ENCODE measurements at regions of chr11 and their contacts with region 1.

Region 1: DNA sequence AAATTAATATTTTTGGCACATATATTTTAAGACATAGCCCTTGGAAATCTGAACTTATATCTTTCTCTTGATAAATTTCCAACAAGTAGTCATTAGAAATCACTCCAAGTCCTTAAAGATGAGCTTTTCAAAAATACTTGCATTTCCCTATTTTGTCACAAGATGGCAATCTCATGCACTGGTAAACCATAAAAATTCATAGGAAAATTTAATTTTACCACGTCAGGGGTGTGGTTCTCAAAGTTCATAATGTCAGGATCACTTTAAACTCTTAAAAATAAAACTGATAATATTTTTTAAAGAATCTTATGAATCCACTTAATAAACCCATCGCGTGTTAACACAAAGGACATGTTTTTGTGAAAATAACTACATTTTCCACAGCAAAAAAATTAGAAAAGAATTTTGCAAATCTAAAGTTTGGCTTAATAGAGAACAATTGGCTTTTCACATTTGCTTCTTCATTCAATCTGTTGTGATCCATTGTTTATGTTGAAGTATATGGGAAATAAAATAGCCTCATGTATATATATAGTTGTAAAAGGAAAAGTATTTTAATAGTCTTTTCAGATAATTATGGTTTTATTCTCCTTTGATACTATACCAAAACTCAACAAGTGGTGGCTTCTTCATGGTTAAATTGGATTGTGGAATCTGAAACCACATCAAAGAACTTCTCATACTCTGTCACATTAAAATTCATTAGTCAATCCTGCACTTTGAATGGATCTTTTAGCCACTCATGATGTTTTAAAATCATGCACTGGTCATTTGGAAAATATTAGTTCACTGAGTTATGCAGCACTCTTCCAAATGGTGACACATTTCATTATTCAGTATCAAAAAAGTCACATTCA is 169.1 kb downstream of the CADM1 start:
- DNase-seq: peak in 1 of 2 experiments; percentile 56
- H3K4me3 ChIP-seq: no peak overlapping the region
- H3K4me3 Mint-ChIP-seq: no peak overlapping the region
- H3K27ac Mint-ChIP-seq: no peak overlapping the region
- H3K4me1 ChIP-seq: peaks cover 21% of the 10 kb centered on the region
- H3K4me1 Mint-ChIP-seq: peaks cover 6% of the 10 kb centered on the region
- H3K27me3 ChIP-seq: no peaks in the 10 kb centered on the region
- H3K27me3 Mint-ChIP-seq: no peaks in the 10 kb centered on the region
- CTCF ChIP-seq: peak; percentile 85

Region 2: GRCh38 chr11:115409691-115410220 is 74.6 kb after region 1 on chr11:
- CTCF ChIA-PET with region 1: interaction called, 4 read pairs
- POLR2A ChIA-PET with region 1: no interaction called
- intact Hi-C with region 1: loop called (anchors 2 kb)
- DNase-seq: peak in 1 of 2 experiments; percentile 24
- H3K4me3 ChIP-seq: no peak overlapping the region
- H3K4me3 Mint-ChIP-seq: no peak overlapping the region
- H3K27ac Mint-ChIP-seq: peak overlapping the region; percentile 1
- H3K4me1 ChIP-seq: peaks cover 43% of the 10 kb centered on the region
- H3K4me1 Mint-ChIP-seq: peaks cover 42% of the 10 kb centered on the region
- H3K27me3 ChIP-seq: no peaks in the 10 kb centered on the region
- H3K27me3 Mint-ChIP-seq: no peaks in the 10 kb centered on the region
- CTCF ChIP-seq: no peak

Region 3: GRCh38 chr11:115548878-115549528 is 213.8 kb after region 1 on chr11:
- CTCF ChIA-PET with region 1: interaction called, 11 read pairs
- POLR2A ChIA-PET with region 1: no interaction called
- intact Hi-C with region 1: loop called (anchors 1 kb)
- DNase-seq: peak; percentile 91 to 96
- H3K4me3 ChIP-seq: no peak overlapping the region
- H3K4me3 Mint-ChIP-seq: peak overlapping the region; percentile 36
- H3K27ac Mint-ChIP-seq: peak overlapping the region; percentile 77
- H3K4me1 ChIP-seq: peaks cover 27% of the 10 kb centered on the region
- H3K4me1 Mint-ChIP-seq: peaks cover 30% of the 10 kb centered on the region
- H3K27me3 ChIP-seq: no peaks in the 10 kb centered on the region
- H3K27me3 Mint-ChIP-seq: no peaks in the 10 kb centered on the region
- CTCF ChIP-seq: peak; percentile 32 to 65

Region 4: DNA sequence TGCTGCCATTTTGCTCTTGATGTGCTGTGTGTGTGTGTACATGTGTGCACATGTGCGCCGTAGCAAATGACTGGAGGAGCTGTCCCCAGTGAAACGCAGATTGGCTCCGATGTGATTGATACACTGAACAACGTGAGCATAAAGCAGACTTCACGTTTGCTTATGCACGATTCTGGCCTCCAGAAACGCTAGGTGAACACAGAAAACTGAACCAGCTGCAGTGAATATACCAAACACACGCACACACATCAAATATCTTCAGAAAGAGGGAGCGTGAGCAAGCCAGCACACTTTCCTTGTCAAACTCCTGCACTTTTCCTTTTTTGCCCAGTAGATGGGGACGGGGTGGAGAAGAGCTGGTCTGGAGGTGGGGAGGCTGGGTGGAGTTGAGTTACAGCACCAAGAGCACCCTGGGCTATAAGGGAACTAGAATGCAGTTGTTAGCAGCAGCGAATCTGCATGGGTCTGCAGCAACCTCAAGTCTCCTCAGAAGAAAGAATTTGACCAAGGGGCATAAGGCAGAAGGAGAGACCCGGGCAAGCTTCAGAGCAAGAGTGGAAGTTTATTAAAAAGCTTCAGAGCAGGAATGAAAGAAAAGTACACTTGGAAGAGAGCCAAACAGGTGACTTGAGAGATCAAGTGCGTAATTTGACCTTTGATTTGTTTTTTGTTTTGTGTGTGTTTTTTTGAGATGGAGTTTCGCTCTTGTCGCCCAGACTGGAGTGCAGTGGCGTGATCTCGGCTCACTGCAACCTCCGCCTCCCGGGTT is 246.9 kb after region 1 on chr11:
- CTCF ChIA-PET with region 1: interaction called, 6 read pairs
- POLR2A ChIA-PET with region 1: no interaction called
- intact Hi-C with region 1: loop called (anchors 1 kb)
- DNase-seq: peak; percentile 70 to 72
- H3K4me3 ChIP-seq: no peak overlapping the region
- H3K4me3 Mint-ChIP-seq: peak overlapping the region; percentile 22
- H3K27ac Mint-ChIP-seq: no peak overlapping the region
- H3K4me1 ChIP-seq: no peaks in the 10 kb centered on the region
- H3K4me1 Mint-ChIP-seq: peaks cover 6% of the 10 kb centered on the region
- H3K27me3 ChIP-seq: no peaks in the 10 kb centered on the region
- H3K27me3 Mint-ChIP-seq: no peaks in the 10 kb centered on the region
- CTCF ChIP-seq: peak; percentile 41 to 70

Region 5: DNA sequence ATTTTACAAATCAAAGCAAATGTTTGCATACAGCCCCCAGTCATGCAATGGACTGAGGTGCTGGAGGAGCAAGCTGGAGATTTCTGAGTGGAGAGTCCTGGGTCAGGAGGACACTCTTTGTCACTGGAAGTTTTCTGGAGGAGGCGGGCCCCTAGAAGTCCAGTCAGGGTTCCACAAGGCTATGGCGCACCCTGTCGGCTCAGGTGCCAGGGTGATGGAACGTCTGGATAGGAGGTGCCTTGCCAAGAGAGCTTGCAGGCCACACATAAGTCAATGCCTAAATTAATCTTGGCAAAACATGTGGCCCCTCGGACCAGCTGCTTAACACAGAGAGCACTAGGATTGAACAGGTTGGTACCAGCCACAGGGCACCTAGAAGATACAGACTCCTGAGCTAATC is 343.8 kb after region 1 on chr11:
- CTCF ChIA-PET with region 1: interaction called, 12 read pairs
- POLR2A ChIA-PET with region 1: no interaction called
- intact Hi-C with region 1: no loop called
- DNase-seq: peak; percentile 58 to 62
- H3K4me3 ChIP-seq: no peak overlapping the region
- H3K4me3 Mint-ChIP-seq: no peak overlapping the region
- H3K27ac Mint-ChIP-seq: no peak overlapping the region
- H3K4me1 ChIP-seq: no peaks in the 10 kb centered on the region
- H3K4me1 Mint-ChIP-seq: peaks cover 6% of the 10 kb centered on the region
- H3K27me3 ChIP-seq: no peaks in the 10 kb centered on the region
- H3K27me3 Mint-ChIP-seq: peaks cover 7% of the 10 kb centered on the region
- CTCF ChIP-seq: peak; percentile 42 to 54

Region 6: GRCh38 chr11:115848611-115849010 is 513.5 kb after region 1 on chr11:
- CTCF ChIA-PET with region 1: no interaction called
- POLR2A ChIA-PET with region 1: no interaction called
- intact Hi-C with region 1: loop called (anchors 2 kb)
- DNase-seq: no peak
- H3K4me3 ChIP-seq: no peak overlapping the region
- H3K4me3 Mint-ChIP-seq: no peak overlapping the region
- H3K27ac Mint-ChIP-seq: no peak overlapping the region
- H3K4me1 ChIP-seq: peaks cover 14% of the 10 kb centered on the region
- H3K4me1 Mint-ChIP-seq: peaks cover 13% of the 10 kb centered on the region
- H3K27me3 ChIP-seq: no peaks in the 10 kb centered on the region
- H3K27me3 Mint-ChIP-seq: peaks cover 16% of the 10 kb centered on the region
- CTCF ChIP-seq: no peak

Region 7: DNA sequence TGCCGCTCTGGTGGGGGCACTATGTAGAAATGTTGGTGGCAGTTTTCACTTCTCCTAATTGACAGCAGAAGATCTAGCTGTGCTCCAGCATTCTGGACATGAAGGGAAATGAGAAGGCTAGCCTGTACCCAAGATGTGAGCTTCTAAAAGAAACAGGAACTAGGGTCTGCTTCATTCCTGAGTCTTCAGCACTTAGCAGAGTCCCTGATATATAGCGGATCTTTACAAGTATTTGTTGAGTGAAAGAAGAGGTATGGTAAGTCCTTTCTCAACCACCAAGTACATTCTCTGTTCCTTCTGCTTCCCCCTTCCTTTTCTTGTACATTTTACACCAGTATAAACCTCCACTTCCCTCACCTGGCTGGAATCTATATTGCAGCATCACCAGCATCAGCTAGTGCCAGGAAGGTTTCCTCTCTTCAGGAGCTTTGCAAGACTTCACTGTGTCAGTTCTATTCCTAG is 577.4 kb after region 1 on chr11:
- CTCF ChIA-PET with region 1: interaction called, 5 read pairs
- POLR2A ChIA-PET with region 1: no interaction called
- intact Hi-C with region 1: loop called (anchors 5 kb)
- DNase-seq: peak in 1 of 2 experiments; percentile 49
- H3K4me3 ChIP-seq: no peak overlapping the region
- H3K4me3 Mint-ChIP-seq: no peak overlapping the region
- H3K27ac Mint-ChIP-seq: no peak overlapping the region
- H3K4me1 ChIP-seq: no peaks in the 10 kb centered on the region
- H3K4me1 Mint-ChIP-seq: no peaks in the 10 kb centered on the region
- H3K27me3 ChIP-seq: no peaks in the 10 kb centered on the region
- H3K27me3 Mint-ChIP-seq: peaks cover 7% of the 10 kb centered on the region
- CTCF ChIP-seq: peak; percentile 62 to 67